RWPE1 (cell line): ENCODE measurements at regions of chr7 and their contacts with region 1.

Region 1: DNA sequence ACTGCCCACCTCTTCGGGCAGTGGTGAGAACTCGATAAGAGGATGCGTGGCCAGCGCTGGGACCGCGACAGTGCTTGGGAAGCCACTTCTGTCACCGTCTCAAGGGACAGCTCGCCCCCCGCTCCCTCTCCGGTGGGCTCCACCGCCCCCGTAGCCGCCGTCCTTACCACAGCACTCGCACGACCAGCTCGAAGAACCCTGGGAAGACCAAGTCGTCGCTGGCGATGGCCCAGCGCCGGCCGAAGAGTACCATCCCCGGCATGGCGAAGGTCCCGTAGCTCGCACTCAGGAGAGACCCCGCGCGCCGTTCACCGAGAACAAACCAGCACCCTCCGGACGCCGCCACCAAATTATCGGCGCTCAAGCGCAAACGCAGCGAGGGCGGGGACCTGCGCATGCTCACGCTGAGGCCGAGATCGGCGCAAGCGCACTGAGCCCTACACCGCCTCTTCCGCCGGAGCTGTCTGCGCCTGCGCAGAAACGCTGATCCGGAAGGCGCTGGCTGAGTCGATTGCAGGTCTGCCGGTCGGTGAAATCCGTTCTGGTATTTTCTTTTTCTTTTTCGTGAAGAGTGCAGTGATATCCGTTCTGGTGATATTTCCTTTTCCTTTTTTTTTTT is at the start of gene DAGLB:
- DNase-seq: peak; percentile 98
- H3K27ac ChIP-seq: peak within 1 kb of the TSS; percentile 96
- CTCF ChIP-seq: no peak

Region 2: GRCh38 chr7:6359021-6359420 is 88.7 kb before region 1 on chr7:
- CTCF ChIA-PET with region 1: no interaction called
- POLR2A ChIA-PET with region 1: no interaction called
- DNase-seq: no peak
- H3K27ac ChIP-seq: no peak overlapping the region
- CTCF ChIP-seq: no peak

Region 3: DNA sequence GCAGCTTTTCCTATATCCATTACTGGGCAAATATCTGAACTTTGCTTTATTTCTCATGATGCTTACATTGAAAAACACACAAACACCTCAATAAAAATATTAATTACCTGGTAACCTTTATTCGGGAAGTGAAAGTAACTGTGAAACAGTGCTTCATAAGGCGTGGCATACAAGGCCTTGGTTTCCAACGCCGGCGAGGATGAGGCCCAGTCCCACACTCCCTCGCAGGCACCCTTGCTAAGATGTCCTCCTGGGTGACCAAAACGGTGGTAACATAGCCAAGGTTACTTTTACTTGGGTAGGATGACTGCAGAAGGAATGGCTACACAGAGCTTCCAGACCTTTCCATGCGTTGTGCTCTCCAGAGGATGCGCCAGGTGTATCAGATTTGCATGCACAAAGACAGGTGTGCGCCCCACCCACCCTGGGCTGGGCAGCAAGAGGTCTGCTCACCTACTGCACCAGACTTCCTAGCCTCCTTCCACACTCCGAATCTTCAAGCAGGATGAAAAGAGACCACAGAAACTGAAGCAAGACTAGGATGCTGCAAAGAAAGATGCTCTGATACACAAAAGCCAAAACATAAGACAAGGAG is 13.4 kb after region 1 on chr7:
- CTCF ChIA-PET with region 1: interaction called, 4 read pairs
- POLR2A ChIA-PET with region 1: interaction called, 10 read pairs
- DNase-seq: no peak
- H3K27ac ChIP-seq: no peak overlapping the region
- CTCF ChIP-seq: no peak